Activated naive CD4-positive, alpha-beta T cell treated with anti-CD3 and anti-CD28 coated beads, Interleukin-2, amount 10 ng/mL, durations not matched to agents 7 days and 5 days (primary cell): ENCODE measurements at regions of chr3 and their contacts with region 1.

Region 1: DNA sequence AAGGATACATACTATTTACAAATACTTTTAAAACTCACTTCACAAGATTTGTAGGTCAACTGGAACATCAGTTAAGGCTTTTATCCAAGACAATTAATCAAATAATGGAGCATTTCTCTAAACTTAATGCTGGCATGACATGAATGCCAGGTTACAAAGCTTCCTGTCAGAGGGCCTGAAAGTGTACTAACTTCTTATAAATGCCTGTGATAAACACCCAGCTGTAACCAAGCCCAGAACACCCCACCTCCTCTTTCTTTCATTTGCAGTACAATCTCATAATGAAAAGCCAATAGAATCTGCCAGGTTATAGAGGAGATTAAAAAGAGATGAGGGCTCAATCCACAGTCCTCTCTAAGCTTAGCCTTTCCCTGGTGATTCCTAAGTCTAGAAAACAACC is 214.4 kb downstream of the OSBPL10 start:
- DNase-seq: no peak
- H3K4me3 Mint-ChIP-seq: no peak overlapping the region
- H3K27ac Mint-ChIP-seq: no peak overlapping the region
- H3K4me1 Mint-ChIP-seq: peaks cover 21% of the 10 kb centered on the region
- H3K27me3 Mint-ChIP-seq: no peaks in the 10 kb centered on the region

Region 2: GRCh38 chr3:31724661-31725060 is 42.0 kb before region 1 on chr3:
- CTCF ChIA-PET with region 1: interaction called, 14 read pairs
- DNase-seq: no peak
- H3K4me3 Mint-ChIP-seq: no peak overlapping the region
- H3K27ac Mint-ChIP-seq: no peak overlapping the region
- H3K4me1 Mint-ChIP-seq: no peaks in the 10 kb centered on the region
- H3K27me3 Mint-ChIP-seq: peaks cover 26% of the 10 kb centered on the region

Region 3: DNA sequence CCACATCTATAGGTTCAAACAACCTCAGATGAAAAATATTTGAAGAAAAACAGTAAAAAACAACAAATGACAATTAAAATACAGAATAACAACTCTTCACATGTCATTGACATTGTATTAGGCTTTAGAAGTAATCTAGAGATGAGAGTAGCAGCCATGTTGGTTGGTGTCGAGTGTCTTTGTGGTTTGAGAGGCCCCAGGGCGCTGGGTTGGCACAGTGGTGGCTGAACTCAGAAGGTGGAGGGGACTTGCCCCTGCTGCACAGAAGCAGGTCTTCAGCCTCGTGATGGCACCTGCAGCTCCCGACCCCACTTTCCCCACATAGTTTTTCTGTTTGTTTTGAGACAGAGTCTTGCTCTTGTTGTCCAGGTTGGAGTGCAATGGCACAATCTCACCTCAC is 27.2 kb after region 1 on chr3:
- CTCF ChIA-PET with region 1: no interaction called
- DNase-seq: no peak
- H3K4me3 Mint-ChIP-seq: no peak overlapping the region
- H3K27ac Mint-ChIP-seq: no peak overlapping the region
- H3K4me1 Mint-ChIP-seq: no peaks in the 10 kb centered on the region
- H3K27me3 Mint-ChIP-seq: peaks cover 12% of the 10 kb centered on the region

Region 4: DNA sequence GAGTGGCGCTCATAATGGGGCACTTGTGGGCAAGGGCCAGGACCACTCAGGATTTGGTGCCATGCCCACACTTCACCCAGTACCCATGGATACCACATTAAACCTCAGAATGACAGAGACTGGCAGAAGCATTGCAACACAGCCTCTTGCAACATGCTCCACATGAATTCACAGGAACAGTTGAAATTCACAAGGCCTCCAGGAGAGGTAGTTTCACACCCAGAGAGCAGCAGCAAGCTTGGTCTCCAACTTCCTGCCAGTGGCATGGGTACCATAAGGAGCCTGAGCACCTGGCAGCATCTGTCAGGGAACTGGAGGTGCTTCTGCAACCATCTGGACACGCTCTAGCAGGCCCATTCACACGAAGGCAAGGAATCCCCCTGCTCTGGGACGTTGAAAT is 113.4 kb after region 1 on chr3:
- CTCF ChIA-PET with region 1: no interaction called
- DNase-seq: no peak
- H3K4me3 Mint-ChIP-seq: no peak overlapping the region
- H3K27ac Mint-ChIP-seq: no peak overlapping the region
- H3K4me1 Mint-ChIP-seq: no peaks in the 10 kb centered on the region
- H3K27me3 Mint-ChIP-seq: peaks cover 13% of the 10 kb centered on the region